IMR-90 (cell line): ENCODE measurements at regions of chr14 and their contacts with region 1.

Region 1: GRCh38 chr14:102390064-102390855 is 27.5 kb downstream of the TECPR2 start:
- DNase-seq: peak; percentile 57
- ATAC-seq: peak; percentile 10
- H3K4me3 ChIP-seq: no peak overlapping the region
- H3K27ac ChIP-seq: no peak overlapping the region
- H3K4me1 ChIP-seq: peaks cover 10% of the 10 kb centered on the region
- H3K27me3 ChIP-seq: no peaks in the 10 kb centered on the region
- CTCF ChIP-seq: no peak
- POLR2A ChIP-seq: no peak
- RAD21 ChIP-seq: no peak

Region 2: DNA sequence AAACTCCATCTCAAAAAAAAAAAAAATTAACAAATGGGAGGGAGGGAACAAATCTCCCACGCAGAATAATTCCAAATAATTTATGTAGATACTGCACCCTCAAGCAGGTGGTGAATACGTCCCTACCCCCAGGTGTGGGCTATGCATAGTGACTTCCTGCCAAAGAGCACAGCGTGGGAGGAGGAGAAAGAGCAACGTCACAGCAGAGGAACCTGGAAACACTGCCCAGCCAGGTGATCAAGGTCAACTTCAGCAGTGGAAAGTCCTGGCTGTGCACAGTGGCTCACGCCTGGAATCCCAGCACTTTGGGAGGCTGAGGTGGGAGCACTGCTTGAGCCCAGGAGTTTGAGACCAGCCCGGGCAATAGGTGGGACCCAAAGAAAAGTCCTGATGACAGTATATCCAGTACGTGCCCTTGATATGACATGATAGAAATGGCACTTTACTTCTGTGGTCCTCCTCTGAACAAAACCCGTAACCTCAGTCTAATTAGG is 37.1 kb before region 1 on chr14:
- CTCF ChIA-PET with region 1: no interaction called
- POLR2A ChIA-PET with region 1: interaction called, 11 read pairs
- dilution Hi-C with region 1: no loop called
- in situ Hi-C with region 1: no loop called
- intact Hi-C with region 1: no loop called
- DNase-seq: no peak
- ATAC-seq: no peak
- H3K4me3 ChIP-seq: no peak overlapping the region
- H3K27ac ChIP-seq: no peak overlapping the region
- H3K4me1 ChIP-seq: no peaks in the 10 kb centered on the region
- H3K27me3 ChIP-seq: no peaks in the 10 kb centered on the region
- CTCF ChIP-seq: no peak
- POLR2A ChIP-seq: no peak
- RAD21 ChIP-seq: no peak

Region 3: GRCh38 chr14:102683399-102684297 is 293.4 kb after region 1 on chr14:
- CTCF ChIA-PET with region 1: no interaction called
- POLR2A ChIA-PET with region 1: no interaction called
- dilution Hi-C with region 1: no loop called
- in situ Hi-C with region 1: no loop called
- intact Hi-C with region 1: no loop called
- DNase-seq: no peak
- ATAC-seq: no peak
- H3K4me3 ChIP-seq: no peak overlapping the region
- H3K27ac ChIP-seq: no peak overlapping the region
- H3K4me1 ChIP-seq: no peaks in the 10 kb centered on the region
- H3K27me3 ChIP-seq: no peaks in the 10 kb centered on the region
- CTCF ChIP-seq: no peak
- POLR2A ChIP-seq: no peak
- RAD21 ChIP-seq: no peak